ENCODE measurements at regions of chr12 and their contacts with region 1.

Region 1: DNA sequence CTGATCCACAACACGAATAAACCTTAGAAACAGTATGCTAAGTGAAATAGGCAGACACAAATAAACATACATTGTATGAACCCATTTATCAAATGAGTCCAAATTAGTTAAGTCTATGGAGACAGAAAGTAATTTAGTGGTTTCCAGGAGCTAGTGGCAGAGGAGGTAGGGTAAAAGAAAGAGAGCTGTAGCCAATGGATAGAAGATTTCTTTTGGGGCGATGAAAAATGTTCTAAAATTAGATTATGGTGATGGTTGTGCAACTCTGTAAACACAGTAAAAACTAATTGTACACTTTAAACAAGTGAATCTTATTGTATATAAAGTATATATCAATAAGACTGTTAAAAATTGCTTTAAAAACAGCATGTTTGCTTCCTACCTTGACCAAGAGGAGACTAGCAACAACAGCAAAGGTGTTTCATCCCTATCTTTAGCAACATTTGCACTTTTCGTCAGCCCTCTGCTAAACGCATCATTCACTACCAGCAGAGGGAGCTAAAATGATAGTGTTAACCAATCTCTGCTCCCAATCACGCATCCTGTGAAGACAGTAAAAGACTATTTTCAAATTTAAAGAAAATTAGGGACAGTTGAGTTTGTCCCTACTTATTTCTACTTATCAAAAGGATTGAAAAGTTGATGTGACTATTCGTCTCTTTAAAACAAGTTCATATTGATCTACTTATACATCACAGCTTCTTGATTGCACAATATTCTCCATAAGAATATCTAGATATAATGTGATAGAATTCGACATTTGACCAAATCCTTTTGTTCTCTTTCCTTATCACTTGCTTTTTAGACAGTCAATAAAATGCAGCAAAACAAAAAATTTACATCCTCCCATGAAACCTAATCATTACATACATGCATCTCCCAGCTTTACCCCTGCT is 24.0 kb upstream of the LGR5 start:
- DNase-seq: no peak
- H3K4me3 ChIP-seq: no peak overlapping the region
- H3K27ac ChIP-seq: no peak overlapping the region
- H3K4me1 ChIP-seq: no peaks in the 10 kb centered on the region
- H3K27me3 ChIP-seq: no peaks in the 10 kb centered on the region
- CTCF ChIP-seq: peak in 10 of 11 experiments; percentile 35 to 76 (median 60)
- POLR2A ChIP-seq: no peak

Region 2: DNA sequence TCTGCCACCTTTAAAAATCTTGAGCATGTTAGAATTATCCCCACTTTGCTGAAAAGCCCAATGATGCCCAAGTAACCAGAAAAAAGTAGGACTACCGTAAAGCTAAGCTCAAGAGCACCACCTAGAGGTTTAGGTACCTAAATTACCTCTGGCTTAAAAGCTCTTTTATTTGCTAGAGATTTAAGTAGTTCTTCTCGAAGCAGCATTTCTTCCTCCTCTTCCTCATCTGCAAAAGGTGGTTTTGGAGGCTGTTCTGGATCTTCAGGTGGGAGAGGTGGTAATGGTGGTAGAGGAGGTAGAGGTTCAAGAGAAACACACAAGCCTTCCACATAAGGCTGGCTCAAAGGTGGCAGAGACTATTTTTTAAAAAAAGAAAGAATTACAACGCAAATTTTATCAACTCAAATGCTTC is 221.1 kb after region 1 on chr12:
- intact Hi-C with region 1: loop called (anchors 5 kb)
- DNase-seq: no peak
- H3K4me3 ChIP-seq: no peak overlapping the region
- H3K27ac ChIP-seq: no peak overlapping the region
- H3K4me1 ChIP-seq: peaks cover 0 to 22% (median 6%) of the 10 kb centered on the region in 6 donors
- H3K27me3 ChIP-seq: no peaks in the 10 kb centered on the region
- CTCF ChIP-seq: peak in 10 of 11 experiments; percentile 10 to 73 (median 58)
- POLR2A ChIP-seq: no peak

Region 3: DNA sequence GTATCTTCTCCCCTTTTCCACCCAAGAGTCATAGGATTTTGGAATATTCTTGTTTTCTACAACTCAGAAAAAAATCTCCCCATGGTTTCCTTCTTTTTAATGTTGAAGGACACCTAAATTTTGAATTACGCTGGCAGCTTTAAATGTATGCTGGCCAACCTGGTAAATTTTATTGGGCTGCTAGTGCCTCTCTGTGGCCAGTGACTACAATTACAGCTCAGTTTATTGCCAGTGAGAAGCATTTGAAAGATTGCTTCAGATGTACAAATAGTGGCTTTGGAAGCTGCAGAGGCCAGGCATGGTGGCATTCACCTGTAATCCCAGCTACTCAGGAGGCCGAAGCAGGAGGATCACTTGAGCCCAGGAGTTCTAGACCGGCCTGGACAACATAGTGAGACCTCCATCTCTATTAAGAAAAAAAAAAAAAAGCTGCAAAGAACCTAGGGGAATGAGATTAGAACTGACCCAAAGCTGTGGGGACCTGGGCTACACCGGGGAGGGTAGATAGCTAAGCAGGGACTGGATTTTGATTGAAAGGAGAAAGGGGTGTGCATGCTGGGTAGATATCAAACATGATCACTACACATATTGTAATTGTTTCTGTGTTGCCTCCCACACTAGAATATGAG is 331.5 kb after region 1 on chr12:
- intact Hi-C with region 1: loop called (anchors 5 kb)
- DNase-seq: no peak
- H3K4me3 ChIP-seq: no peak overlapping the region
- H3K27ac ChIP-seq: no peak overlapping the region
- H3K4me1 ChIP-seq: peaks cover 0 to 5% (median 0%) of the 10 kb centered on the region in 6 donors
- H3K27me3 ChIP-seq: peaks cover 0 to 13% (median 0%) of the 10 kb centered on the region in 7 donors
- CTCF ChIP-seq: peak; percentile 47 to 84 (median 75)
- POLR2A ChIP-seq: no peak